Activated CD4-positive, alpha-beta T cell treated with anti-CD3 and anti-CD28 coated beads for 36 hours (primary cell): ENCODE measurements at regions of chr1 and their contacts with region 1.

Region 1: DNA sequence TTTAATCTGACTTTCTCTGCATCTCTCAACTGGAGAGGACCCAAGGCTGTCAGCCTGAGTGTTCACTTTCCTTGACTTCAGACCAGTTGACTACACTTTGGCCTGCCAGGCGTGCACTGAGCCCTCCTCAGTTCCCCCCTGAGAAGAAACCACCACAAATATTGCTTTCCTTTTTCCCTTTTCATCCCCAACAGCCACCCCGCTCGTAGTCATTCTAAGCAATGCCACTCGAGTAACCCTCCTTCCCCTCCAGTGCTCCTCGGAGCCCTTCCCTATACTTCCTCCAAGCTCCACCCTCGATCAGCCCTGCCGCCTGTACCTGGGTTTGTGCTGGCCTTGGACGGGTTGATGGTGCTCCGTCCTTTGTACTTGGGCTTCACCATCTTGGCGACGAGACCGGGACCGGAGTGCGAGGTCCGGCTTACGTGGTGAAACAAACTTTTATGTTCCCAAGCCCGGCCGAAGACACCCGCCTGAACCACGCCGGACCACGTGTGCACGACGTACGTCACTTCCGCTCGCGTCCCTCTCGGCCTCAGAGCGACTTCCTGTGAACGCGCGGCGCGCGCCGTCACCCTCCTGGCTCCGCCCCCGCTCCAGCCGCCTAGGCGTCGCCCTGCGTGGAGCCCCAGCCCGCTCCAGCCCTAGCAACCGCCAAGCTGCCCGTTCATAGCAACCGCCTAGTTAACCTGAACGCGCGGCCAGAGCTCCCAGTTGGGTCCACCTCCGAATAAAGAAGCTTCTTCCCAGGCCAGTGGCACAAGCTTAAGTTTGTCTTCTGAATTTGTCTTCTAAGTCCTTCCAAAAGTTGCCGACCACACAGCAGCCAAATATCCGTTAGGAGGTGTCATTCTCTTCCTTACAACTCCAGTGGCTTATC is at the start of gene GNL2:
- DNase-seq: peak; percentile 99
- ATAC-seq: peak; percentile 98
- H3K4me3 Mint-ChIP-seq: peak within 1 kb of the TSS; percentile 98
- H3K27ac Mint-ChIP-seq: peak within 1 kb of the TSS; percentile 92
- H3K4me1 Mint-ChIP-seq: peaks cover 37% of the 10 kb centered on the region
- H3K27me3 Mint-ChIP-seq: no peaks in the 10 kb centered on the region
- total RNA-seq, gene GNL2: 82.3 to 98.8 TPM

Region 2: DNA sequence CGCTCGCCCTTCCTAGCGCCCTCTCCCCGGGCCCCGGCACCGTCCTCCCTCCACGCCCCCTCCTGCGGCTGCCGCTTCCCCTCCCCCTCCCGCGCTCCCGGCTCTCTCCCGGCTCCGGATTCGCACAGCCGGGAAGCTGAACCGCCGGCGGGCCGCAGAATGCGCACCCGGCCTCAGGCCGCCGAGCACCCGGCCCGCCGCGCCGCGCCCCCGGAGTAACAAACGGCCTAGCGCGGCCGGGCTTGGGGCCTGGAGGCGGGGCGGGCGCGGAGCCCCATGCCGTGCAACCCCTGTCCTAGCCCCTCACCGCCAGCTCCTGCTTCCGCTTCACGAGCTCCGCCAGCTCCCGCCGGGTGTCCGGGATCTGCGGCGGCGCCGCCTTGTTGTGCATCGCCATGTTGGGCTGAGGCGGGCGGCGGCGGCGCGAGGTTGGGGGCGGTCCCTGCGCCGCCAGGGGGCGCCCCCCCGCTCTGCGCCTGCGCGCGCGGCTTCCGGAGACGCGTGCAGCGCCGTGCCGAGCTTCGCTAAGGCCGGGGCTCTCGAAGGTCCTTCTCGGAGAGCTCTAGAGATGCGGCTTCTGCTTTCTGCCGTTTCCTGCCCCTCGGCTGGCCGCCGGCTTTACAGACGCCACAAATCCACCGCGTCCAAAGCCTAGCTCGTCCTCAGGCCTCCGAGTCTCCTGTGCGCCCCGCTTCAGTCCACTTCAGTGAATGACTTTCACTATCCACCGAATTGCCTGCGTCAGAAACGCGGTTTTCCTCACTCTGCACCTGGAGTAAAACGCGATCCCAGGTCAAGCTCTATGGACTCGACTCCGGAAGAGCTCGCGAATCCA is 81.1 kb before region 1 on chr1 and contains the start of gene MEAF6:
- CTCF ChIA-PET with region 1: interaction called, 3 read pairs
- POLR2A ChIA-PET with region 1: no interaction called
- intact Hi-C with region 1: loop called in 1 of 2 experiments (anchors 1 kb)
- DNase-seq: peak; percentile 91
- ATAC-seq: peak; percentile 88
- H3K4me3 Mint-ChIP-seq: peak within 1 kb of the TSS; percentile 87
- H3K27ac Mint-ChIP-seq: peak within 1 kb of the TSS; percentile 93
- H3K4me1 Mint-ChIP-seq: peaks cover 41% of the 10 kb centered on the region
- H3K27me3 Mint-ChIP-seq: no peaks in the 10 kb centered on the region
- total RNA-seq, gene MEAF6: 66.8 to 72.2 TPM

Region 3: DNA sequence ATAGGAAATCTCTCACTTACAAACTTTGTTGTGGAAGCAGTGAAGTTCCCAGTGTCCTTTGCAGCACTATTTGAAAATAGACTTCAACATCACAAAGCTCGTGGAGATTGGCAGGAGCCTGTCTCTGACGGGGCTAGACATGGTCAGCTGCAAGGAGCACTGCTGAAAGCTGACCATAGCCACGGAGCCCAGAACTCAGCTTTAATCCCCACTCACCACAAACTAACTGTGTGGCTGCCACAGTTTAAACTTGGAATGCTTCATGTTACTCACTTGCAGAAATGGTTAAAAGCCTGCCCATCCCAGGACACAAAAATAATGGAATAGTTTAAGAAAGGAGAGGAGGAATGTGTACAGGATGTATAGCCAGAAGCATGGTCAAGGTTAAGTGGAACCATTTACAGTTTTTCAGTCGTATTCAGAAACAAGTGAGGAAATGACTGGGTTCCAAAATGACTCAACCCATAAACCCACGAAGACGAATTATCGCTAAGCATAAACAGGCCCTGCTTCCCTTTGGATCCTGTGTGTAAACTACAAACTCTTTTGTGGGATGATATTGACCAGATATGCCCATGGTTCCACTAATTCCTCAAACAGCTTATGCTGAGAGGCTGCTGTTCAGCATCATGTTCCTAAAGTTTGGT is 20.7 kb before region 1 on chr1:
- CTCF ChIA-PET with region 1: no interaction called
- POLR2A ChIA-PET with region 1: interaction called, 4 read pairs
- intact Hi-C with region 1: loop called in 1 of 2 experiments (anchors 2 kb)
- DNase-seq: peak; percentile 26
- ATAC-seq: peak; percentile 56
- H3K4me3 Mint-ChIP-seq: no peak overlapping the region
- H3K27ac Mint-ChIP-seq: peak overlapping the region; percentile 90
- H3K4me1 Mint-ChIP-seq: peaks cover 55% of the 10 kb centered on the region
- H3K27me3 Mint-ChIP-seq: no peaks in the 10 kb centered on the region

Region 4: GRCh38 chr1:37859507-37860345 is 264.0 kb after region 1 on chr1 and contains the start of gene MTF1:
- CTCF ChIA-PET with region 1: interaction called, 3 read pairs
- POLR2A ChIA-PET with region 1: no interaction called
- intact Hi-C with region 1: loop called (anchors 1 to 2 kb)
- DNase-seq: peak; percentile 98
- ATAC-seq: peak; percentile 98
- H3K4me3 Mint-ChIP-seq: peak within 1 kb of the TSS; percentile 87
- H3K27ac Mint-ChIP-seq: peak within 1 kb of the TSS; percentile 93
- H3K4me1 Mint-ChIP-seq: peaks cover 40% of the 10 kb centered on the region
- H3K27me3 Mint-ChIP-seq: no peaks in the 10 kb centered on the region
- total RNA-seq, gene MTF1: 16.1 to 23.8 TPM